ENCODE measurements at regions of chr7 and their contacts with region 1.

Region 1: GRCh38 chr7:142385491-142386340 is 127.9 kb upstream of the PRSS58 start:
- DNase-seq: peak in 4 of 5 donors; percentile 16 to 31 (median 28)
- H3K4me3 ChIP-seq: no peak overlapping the region
- H3K4me3 Mint-ChIP-seq: peak overlapping the region in 4 of 8 donors; percentile 3 to 32 (median 11)
- H3K27ac ChIP-seq: no peak overlapping the region
- H3K27ac Mint-ChIP-seq: peak overlapping the region in 2 of 7 donors; percentile 25 to 46
- H3K4me1 ChIP-seq: peaks cover 20% of the 10 kb centered on the region
- H3K4me1 Mint-ChIP-seq: peaks cover 18 to 28% (median 20%) of the 10 kb centered on the region in 4 donors
- H3K27me3 ChIP-seq: no peaks in the 10 kb centered on the region
- H3K27me3 Mint-ChIP-seq: no peaks in the 10 kb centered on the region

Region 2: DNA sequence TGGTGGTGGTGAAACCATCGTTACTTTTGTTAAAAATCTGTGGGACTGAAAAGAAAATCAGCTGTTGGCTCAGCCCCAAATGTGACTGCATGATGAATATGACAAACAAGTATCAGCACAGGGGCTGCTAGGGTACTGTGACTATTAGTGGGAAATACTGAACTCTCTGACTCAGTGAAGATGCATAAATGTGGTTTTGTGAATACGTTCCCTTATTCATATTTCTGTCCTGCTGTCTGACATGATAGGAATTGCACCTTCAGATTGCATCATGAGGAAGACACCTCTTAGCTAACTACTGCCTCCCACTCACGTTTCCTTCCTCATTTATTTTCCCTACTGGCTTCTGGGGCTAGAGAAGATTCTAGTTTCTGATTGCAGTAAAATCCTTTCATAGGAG is 440.4 kb before region 1 on chr7:
- CTCF ChIA-PET with region 1: no interaction called
- POLR2A ChIA-PET with region 1: no interaction called
- intact Hi-C with region 1: no loop called
- DNase-seq: no peak
- H3K4me3 ChIP-seq: no peak overlapping the region
- H3K4me3 Mint-ChIP-seq: no peak overlapping the region
- H3K27ac ChIP-seq: no peak overlapping the region
- H3K27ac Mint-ChIP-seq: no peak overlapping the region
- H3K4me1 ChIP-seq: no peaks in the 10 kb centered on the region
- H3K4me1 Mint-ChIP-seq: no peaks in the 10 kb centered on the region
- H3K27me3 ChIP-seq: no peaks in the 10 kb centered on the region
- H3K27me3 Mint-ChIP-seq: peaks cover 1 to 5% of the 10 kb centered on the region in 2 donors

Region 3: DNA sequence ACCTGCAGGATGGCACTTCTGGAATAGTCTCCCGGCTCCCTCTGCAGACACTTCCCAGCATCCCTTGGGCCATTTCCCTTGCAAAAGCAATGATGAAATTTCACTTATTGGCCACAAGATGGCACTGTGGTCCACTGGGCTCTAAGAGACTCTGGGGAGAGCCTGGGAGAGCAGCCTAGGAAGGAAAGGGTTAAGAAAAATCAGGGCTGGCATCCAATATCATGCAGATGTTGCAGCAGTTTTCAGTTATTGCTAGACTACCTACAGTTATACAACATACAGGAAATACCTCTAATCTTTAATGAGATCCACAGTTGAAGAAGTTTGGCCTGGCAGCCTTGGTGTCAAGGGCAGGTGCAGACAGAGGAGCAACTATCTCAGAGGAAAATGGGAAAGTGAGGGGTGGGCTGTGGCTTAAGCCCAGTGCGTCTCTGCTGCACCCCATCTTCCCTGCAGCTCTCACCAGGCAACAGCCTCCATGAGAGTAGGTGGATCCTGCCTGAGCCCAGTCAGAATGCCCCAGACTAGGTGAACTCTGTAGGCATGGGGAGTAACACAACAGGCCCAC is 27.7 kb before region 1 on chr7:
- CTCF ChIA-PET with region 1: interaction called, 29 read pairs
- POLR2A ChIA-PET with region 1: interaction called, 4 read pairs
- intact Hi-C with region 1: loop called (anchors 2 kb)
- DNase-seq: peak in 4 of 5 donors; percentile 35 to 59 (median 42)
- H3K4me3 ChIP-seq: no peak overlapping the region
- H3K4me3 Mint-ChIP-seq: peak overlapping the region in 3 of 8 donors; percentile 3 to 29 (median 14)
- H3K27ac ChIP-seq: no peak overlapping the region
- H3K27ac Mint-ChIP-seq: peak overlapping the region in 5 of 7 donors; percentile 17 to 67 (median 42)
- H3K4me1 ChIP-seq: peaks cover 42% of the 10 kb centered on the region
- H3K4me1 Mint-ChIP-seq: peaks cover 19 to 54% (median 42%) of the 10 kb centered on the region in 4 donors
- H3K27me3 ChIP-seq: no peaks in the 10 kb centered on the region
- H3K27me3 Mint-ChIP-seq: peaks cover 0 to 5% of the 10 kb centered on the region in 2 donors

Measured in CD4-positive, alpha-beta memory T cell (primary cell).